ENCODE measurements at regions of chr6 and their contacts with region 1.

Region 1: GRCh38 chr6:27687154-27688013 is 214.5 kb upstream of the ZNF184 start:
- DNase-seq: peak; percentile 90
- H3K4me3 Mint-ChIP-seq: peak overlapping the region; percentile 93
- H3K27ac Mint-ChIP-seq: peak overlapping the region; percentile 94
- H3K4me1 Mint-ChIP-seq: peaks cover 18% of the 10 kb centered on the region
- H3K27me3 Mint-ChIP-seq: peaks cover 26% of the 10 kb centered on the region

Region 2: DNA sequence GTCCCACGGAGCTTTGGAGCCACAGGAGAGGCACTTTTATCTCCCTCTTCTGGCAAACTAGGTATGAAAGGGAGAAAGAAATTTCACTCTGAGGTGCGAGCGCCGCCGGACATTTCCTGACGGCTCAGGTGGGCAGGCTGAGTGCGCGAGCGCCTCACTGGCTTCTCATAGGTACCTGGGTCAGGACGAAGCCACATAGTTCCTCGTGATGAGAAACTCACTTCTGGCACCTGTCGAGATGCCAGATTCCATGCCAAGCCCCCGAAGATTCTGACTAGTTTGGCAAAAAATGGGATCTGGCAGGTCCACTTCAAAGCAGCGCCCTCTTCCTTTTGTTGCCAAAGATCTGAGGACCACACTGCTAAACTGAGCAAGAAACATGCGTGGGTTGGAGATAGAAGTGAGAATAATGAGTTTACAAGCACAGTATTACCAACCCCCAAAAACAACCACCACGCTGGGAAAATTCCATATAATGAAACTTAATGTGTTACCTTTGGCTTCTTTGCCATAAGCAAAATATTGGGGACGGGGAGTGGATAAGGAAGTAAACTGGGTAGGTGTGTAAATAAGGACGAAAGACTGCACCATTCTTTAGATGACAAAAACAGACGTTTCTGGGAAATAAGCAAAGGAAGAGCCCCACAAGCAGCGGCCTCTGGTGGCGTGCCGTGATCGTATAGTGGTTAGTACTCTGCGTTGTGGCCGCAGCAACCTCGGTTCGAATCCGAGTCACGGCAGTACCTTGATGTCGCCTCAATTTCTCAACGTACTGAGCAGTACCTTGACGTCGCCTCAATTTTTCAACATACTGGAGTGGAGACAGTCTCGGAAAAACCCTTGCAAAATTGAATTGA is 529.7 kb before region 1 on chr6:
- CTCF ChIA-PET with region 1: no interaction called
- intact Hi-C with region 1: loop called (anchors 5 kb)
- DNase-seq: peak; percentile 94
- H3K4me3 Mint-ChIP-seq: peak overlapping the region; percentile 76
- H3K27ac Mint-ChIP-seq: peak overlapping the region; percentile 83
- H3K4me1 Mint-ChIP-seq: peaks cover 43% of the 10 kb centered on the region
- H3K27me3 Mint-ChIP-seq: no peaks in the 10 kb centered on the region

Region 3: DNA sequence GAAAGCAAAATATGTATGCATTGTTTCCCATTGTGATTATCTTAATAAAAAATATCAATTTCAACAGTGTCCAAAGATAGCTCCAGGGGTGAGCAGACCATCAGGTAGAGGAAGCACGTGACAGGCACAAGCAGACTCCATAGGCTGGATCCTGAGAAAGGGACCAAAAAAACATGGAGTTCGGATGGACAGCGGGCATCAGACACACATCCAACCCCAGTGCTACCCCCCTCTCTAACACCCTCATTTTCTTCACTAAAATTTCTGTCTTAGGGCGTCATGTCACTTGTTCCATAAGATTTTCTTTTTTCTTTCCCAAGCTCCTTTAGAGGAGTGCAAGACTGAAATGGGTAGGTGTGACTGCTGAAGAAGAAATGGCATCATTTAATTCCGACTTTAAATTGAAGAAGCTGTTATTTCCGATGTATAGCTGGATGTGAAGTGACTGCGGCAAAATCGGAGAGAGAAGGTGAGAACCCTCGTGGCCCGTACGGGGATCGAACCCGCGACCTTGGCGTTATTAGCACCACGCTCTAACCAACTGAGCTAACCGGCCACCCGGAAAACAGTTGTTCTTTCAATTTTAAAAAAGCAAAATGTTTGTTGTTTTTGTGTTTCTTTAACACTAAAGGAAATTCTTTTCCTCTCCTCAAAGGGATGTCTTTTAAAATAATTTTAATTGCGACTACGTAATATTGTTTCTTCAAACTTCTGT is 450.1 kb before region 1 on chr6:
- CTCF ChIA-PET with region 1: no interaction called
- intact Hi-C with region 1: loop called (anchors 5 kb)
- DNase-seq: peak; percentile 75
- H3K4me3 Mint-ChIP-seq: peak overlapping the region; percentile 53
- H3K27ac Mint-ChIP-seq: peak overlapping the region; percentile 5
- H3K4me1 Mint-ChIP-seq: peaks cover 20% of the 10 kb centered on the region
- H3K27me3 Mint-ChIP-seq: peaks cover 68% of the 10 kb centered on the region

Region 4: DNA sequence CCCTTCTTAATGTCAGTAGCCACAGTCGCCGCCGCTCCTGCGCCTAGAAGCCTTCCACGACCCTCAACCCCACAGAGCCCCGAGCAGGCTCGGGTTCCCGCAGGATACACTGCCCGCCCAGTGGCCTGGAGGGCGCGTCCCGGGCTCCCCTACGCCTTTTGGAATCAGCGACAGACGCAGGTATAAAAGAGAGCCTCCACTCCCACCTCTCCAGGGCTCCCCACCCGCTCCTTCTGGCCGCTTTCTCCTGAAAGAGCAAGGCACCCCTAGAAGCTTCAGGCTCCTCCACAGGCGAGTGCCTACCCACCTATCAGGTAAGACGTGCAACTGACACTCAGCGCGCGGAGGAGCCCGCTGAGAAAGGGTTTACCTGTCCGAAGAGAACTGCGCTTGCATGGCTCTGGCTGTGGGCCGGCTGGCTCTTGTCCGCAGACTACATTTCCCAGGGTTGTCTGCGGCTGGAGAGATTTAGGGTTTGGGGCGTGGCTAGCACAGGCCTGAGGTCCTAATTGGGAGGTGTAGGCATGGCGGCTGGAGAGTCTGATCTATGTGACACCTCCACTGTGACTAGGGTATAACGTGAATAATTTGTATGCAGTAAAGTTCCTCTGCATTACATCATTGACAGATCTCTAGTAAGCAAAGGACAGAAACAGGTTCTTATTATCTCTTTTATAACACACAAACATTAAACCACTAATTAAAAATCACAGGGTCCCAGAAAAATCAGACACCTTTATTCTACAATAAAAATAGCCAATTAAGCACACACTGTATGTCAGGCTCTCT is 312.4 kb before region 1 on chr6:
- CTCF ChIA-PET with region 1: no interaction called
- intact Hi-C with region 1: loop called (anchors 5 kb)
- DNase-seq: peak; percentile 89
- H3K4me3 Mint-ChIP-seq: peak overlapping the region; percentile 82
- H3K27ac Mint-ChIP-seq: peak overlapping the region; percentile 67
- H3K4me1 Mint-ChIP-seq: peaks cover 18% of the 10 kb centered on the region
- H3K27me3 Mint-ChIP-seq: no peaks in the 10 kb centered on the region

Region 5: DNA sequence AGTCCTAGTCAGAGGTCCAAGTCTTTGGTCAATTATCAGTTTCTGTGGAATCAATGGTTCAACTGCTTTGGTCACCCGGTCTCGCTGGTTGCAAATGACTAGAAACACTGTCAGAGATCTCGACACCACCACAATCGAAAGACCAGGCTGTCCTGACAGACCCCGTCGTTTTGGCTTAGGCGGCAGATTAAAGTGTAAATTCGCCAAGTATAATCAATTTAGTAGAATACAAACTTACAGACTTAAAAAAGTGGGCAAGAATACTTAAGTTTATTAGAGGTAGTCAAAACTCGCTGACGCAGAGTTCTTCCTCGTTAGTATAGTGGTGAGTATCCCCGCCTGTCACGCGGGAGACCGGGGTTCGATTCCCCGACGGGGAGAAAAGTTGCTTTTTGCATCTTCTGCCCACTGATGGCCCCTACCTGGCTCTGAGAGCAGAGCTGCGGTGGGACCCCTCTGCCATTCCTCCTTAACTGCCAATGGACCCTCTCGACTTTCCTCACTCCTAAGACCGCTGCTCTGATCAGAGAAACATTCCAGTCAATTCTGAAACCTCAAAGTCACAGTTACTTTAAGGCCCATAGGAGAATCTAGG is 183.9 kb before region 1 on chr6:
- CTCF ChIA-PET with region 1: no interaction called
- intact Hi-C with region 1: loop called (anchors 2 kb)
- DNase-seq: peak; percentile 88
- H3K4me3 Mint-ChIP-seq: peak overlapping the region; percentile 90
- H3K27ac Mint-ChIP-seq: peak overlapping the region; percentile 86
- H3K4me1 Mint-ChIP-seq: peaks cover 24% of the 10 kb centered on the region
- H3K27me3 Mint-ChIP-seq: peaks cover 1% of the 10 kb centered on the region

Region 6: GRCh38 chr6:27630727-27631608 is 56.4 kb before region 1 on chr6:
- CTCF ChIA-PET with region 1: interaction called, 4 read pairs
- intact Hi-C with region 1: loop called (anchors 2 kb)
- DNase-seq: peak; percentile 81
- H3K4me3 Mint-ChIP-seq: peak overlapping the region; percentile 86
- H3K27ac Mint-ChIP-seq: peak overlapping the region; percentile 86
- H3K4me1 Mint-ChIP-seq: peaks cover 5% of the 10 kb centered on the region
- H3K27me3 Mint-ChIP-seq: peaks cover 76% of the 10 kb centered on the region

Region 7: GRCh38 chr6:27736686-27737085 is 49.3 kb after region 1 on chr6:
- CTCF ChIA-PET with region 1: no interaction called
- intact Hi-C with region 1: loop called (anchors 5 kb)
- DNase-seq: no peak
- H3K4me3 Mint-ChIP-seq: no peak overlapping the region
- H3K27ac Mint-ChIP-seq: no peak overlapping the region
- H3K4me1 Mint-ChIP-seq: peaks cover 12% of the 10 kb centered on the region
- H3K27me3 Mint-ChIP-seq: peaks cover 13% of the 10 kb centered on the region